ENCODE measurements at regions of chr5 and their contacts with region 1.

Region 1: GRCh38 chr5:38739007-38739743 is 106.6 kb upstream of the OSMR start:
- DNase-seq: peak; percentile 95
- ATAC-seq: peak; percentile 97
- H3K4me3 ChIP-seq: peak overlapping the region; percentile 20; the same call in 1 of the 2 replicates
- H3K27ac ChIP-seq: peak overlapping the region; percentile 83
- H3K4me1 ChIP-seq: peaks cover 21% of the 10 kb centered on the region
- H3K27me3 ChIP-seq: no peaks in the 10 kb centered on the region
- CTCF ChIP-seq: no peak

Region 2: DNA sequence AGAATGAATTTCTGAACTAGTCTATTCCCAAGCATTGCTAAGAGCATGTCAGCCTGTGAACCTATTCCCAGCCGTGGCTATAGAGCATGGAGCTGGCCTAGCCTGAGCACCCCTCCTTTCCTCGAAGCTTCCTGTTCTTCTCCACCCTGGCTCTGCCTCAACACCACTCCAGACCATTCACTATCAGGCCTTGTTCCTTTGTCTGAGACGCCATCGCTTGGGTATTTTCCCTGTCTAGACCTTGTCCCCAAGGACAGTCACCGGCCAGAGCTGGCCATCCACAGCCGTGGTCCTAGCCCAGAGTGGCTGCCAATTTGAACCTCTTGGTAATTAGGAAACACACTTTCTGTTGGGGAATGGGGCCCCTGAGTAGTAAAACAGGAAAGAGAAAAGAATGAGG is 288.5 kb before region 1 on chr5:
- CTCF ChIA-PET with region 1: no interaction called
- POLR2A ChIA-PET with region 1: no interaction called
- intact Hi-C with region 1: no loop called
- DNase-seq: no peak
- ATAC-seq: no peak
- H3K4me3 ChIP-seq: no peak overlapping the region
- H3K27ac ChIP-seq: no peak overlapping the region
- H3K4me1 ChIP-seq: no peaks in the 10 kb centered on the region
- H3K27me3 ChIP-seq: no peaks in the 10 kb centered on the region
- CTCF ChIP-seq: no peak

Region 3: GRCh38 chr5:38650946-38651345 is 88.2 kb before region 1 on chr5:
- CTCF ChIA-PET with region 1: no interaction called
- POLR2A ChIA-PET with region 1: no interaction called
- intact Hi-C with region 1: no loop called
- DNase-seq: peak; percentile 74
- ATAC-seq: peak; percentile 93
- H3K4me3 ChIP-seq: peak overlapping the region; percentile 59
- H3K27ac ChIP-seq: no peak overlapping the region
- H3K4me1 ChIP-seq: peaks cover 16% of the 10 kb centered on the region
- H3K27me3 ChIP-seq: no peaks in the 10 kb centered on the region
- CTCF ChIP-seq: no peak

Region 4: DNA sequence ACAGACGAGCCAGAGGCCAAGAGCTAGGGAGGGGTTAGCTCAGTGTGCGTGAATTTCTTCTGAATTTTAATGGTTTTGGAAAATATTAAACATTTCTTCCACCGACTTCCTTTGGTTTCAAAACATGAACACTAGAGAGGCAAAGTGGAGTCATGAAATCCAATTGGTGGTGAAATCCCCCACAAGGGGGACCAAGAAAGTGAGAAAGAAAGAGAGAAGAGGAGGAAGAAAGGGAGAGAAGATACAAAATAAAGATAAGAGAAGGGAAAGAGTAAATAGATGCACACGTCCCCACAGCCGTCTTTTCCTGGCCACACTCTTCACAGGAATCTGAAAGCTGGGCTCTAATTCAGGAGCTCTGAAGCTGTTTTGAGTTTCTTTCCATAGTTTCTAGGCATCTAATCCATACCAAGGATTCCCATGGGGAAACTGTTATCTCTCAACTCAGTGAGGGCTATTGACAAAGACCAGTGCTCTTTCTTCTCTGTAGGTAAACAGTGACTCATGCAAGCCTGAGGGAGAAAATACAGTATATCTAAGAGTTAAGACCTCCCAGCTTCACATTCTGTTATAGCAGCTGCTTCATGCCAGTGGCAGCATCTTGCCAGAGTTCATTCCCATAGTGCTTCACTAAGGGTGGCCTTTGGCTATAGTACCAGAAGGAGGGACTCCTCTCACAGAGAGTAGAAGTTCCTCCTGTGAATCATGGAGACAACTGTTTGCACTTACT is 67.0 kb before region 1 on chr5:
- CTCF ChIA-PET with region 1: no interaction called
- POLR2A ChIA-PET with region 1: no interaction called
- intact Hi-C with region 1: no loop called
- DNase-seq: peak; percentile 89
- ATAC-seq: peak; percentile 85
- H3K4me3 ChIP-seq: no peak overlapping the region
- H3K27ac ChIP-seq: no peak overlapping the region
- H3K4me1 ChIP-seq: peaks cover 28% of the 10 kb centered on the region
- H3K27me3 ChIP-seq: no peaks in the 10 kb centered on the region
- CTCF ChIP-seq: no peak

Region 5: DNA sequence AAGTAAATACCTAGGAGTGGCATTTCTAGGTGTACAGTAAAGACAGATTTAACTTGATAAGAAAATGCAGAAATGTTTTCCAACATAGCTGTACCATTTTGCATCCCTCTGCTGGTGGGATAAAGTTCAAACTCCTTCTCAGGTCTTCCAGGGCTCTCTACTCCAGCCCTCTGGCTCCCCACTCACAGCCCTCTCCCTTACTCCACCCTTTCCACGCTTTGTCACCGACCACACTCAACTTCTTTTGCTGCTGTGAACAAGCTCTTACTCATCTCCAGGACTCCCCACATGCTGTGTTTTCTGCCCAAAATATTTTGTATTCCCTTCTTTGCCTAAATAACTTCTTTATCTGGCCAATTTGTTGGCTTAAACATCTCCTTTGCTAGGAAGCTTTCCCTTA is 16.0 kb after region 1 on chr5:
- CTCF ChIA-PET with region 1: interaction called, 3 read pairs
- POLR2A ChIA-PET with region 1: no interaction called
- intact Hi-C with region 1: loop called (anchors 1 kb)
- DNase-seq: peak; percentile 77
- ATAC-seq: peak; percentile 84
- H3K4me3 ChIP-seq: no peak overlapping the region
- H3K27ac ChIP-seq: peak overlapping the region; percentile 84
- H3K4me1 ChIP-seq: peaks cover 35% of the 10 kb centered on the region
- H3K27me3 ChIP-seq: no peaks in the 10 kb centered on the region
- CTCF ChIP-seq: peak; percentile 29; the same call in 1 of the 2 replicates

Measured in PC-3 (cell line).